Heart right ventricle (tissue), 16 donors: ENCODE measurements at regions of chr15 and their contacts with region 1.

Region 1: DNA sequence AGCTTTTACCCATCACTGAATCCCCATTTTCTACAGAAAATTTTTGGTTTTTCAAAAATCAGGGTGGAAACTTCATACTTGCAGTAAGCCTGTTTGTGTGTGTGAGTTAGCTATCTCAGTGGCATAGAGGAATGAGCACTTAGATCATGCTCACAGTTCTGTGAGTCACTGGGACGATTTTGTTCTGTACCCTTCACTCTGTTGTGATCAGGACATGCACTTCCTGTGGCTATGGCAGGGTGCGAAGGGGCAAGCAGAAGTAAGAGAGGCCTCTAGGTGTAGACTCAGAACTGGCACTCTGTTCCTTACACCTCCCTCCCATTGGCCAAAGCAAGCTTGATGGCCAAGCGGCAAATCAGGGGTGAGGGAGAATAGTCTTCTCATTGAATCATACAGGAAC is 11.6 kb downstream of the NIPA2 start:
- DNase-seq: no peak
- ATAC-seq: peak in 1 of 8 donors; percentile 44
- H3K4me3 ChIP-seq: no peak overlapping the region
- H3K27ac ChIP-seq: no peak overlapping the region
- H3K4me1 ChIP-seq: peaks cover 0 to 2% (median 0%) of the 10 kb centered on the region in 9 donors
- H3K27me3 ChIP-seq: no peaks in the 10 kb centered on the region
- CTCF ChIP-seq: no peak

Region 2: GRCh38 chr15:22903961-22904534 is 54.0 kb after region 1 on chr15:
- intact Hi-C with region 1: loop called in 1 of 10 experiments (anchors 10 kb)
- DNase-seq: no peak
- ATAC-seq: peak in 4 of 8 donors; percentile 6 to 48 (median 23)
- H3K4me3 ChIP-seq: no peak overlapping the region
- H3K27ac ChIP-seq: no peak overlapping the region
- H3K4me1 ChIP-seq: no peaks in the 10 kb centered on the region
- H3K27me3 ChIP-seq: no peaks in the 10 kb centered on the region
- CTCF ChIP-seq: no peak

Region 3: GRCh38 chr15:22918056-22918455 is 68.0 kb after region 1 on chr15:
- intact Hi-C with region 1: no loop called
- DNase-seq: no peak
- ATAC-seq: no peak
- H3K4me3 ChIP-seq: no peak overlapping the region
- H3K27ac ChIP-seq: no peak overlapping the region
- H3K4me1 ChIP-seq: no peaks in the 10 kb centered on the region
- H3K27me3 ChIP-seq: no peaks in the 10 kb centered on the region
- CTCF ChIP-seq: no peak

Region 4: DNA sequence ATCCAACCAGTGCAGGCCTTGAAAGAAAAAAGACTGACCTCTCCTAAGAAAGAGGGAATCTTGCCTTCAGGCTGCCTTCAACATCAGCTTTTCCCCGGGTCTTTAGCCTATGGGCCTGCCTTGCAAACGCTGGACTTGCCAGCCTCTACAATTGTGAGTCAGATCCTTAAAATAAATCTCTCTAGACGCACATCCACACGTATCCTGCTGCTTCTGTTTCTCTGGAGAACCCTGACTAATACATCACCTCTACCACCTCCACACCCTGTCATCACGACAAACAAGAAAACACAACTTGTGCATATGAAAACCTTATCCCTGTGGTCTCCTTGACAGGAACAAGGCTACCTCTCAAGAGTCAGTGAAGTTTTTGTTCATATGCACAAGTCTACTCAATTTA is 118.3 kb after region 1 on chr15:
- intact Hi-C with region 1: no loop called
- DNase-seq: no peak
- ATAC-seq: peak in 6 of 8 donors; percentile 36 to 89 (median 60)
- H3K4me3 ChIP-seq: no peak overlapping the region
- H3K27ac ChIP-seq: peak overlapping the region in 4 of 10 donors; percentile 32 to 60 (median 44)
- H3K4me1 ChIP-seq: peaks cover 4 to 50% (median 37%) of the 10 kb centered on the region in 9 donors
- H3K27me3 ChIP-seq: no peaks in the 10 kb centered on the region
- CTCF ChIP-seq: no peak